ENCODE measurements at regions of chr2 and their contacts with region 1.

Region 1: DNA sequence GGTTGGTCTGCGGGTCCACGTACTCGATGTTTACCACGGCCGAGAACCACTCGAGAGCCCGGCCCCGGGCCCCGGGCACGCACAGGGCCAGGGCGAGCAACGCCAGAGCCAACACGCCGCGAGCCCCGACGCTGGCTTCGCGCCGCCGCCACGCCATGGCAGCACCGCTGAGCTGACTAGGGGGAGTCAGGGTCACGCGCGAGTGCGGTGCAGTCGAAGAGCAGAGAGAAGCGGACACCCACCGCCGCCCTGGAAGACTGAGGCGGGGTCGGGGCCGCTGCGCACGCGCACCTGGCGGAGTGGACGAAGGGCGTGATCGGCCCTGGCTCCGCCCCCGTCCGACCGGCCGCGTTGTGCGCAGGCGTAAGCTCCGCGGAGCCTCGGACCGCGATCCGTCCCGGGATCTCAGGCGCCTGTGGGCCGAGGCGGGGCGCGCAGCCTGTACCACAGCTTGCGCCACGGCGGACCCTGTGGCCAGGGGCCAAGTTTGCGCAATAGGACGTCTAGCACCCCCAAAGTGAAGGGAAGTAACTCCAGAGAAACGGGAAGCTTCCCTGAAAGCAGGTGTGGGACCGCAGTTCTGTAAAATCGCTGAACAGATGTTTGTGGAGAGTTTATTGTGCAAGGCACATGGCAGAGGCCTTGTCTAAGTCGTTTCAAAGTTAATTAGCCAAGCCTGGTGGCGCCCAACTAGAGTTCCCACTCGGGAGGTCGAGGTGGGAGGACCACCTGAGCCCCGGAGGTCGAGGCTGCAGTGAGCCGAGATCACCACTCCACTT is at the start of gene RNF149:
- DNase-seq: peak; percentile 88
- ATAC-seq: peak; percentile 86
- H3K4me3 ChIP-seq: peak within 1 kb of the TSS; percentile 76 to 95 (median 93)
- H3K27ac ChIP-seq: peak within 1 kb of the TSS; percentile 85
- H3K4me1 ChIP-seq: peaks cover 65% of the 10 kb centered on the region
- H3K27me3 ChIP-seq: no peaks in the 10 kb centered on the region; a peak in 1 of 5 replicates
- CTCF ChIP-seq: peak; percentile 48
- EP300 ChIP-seq: peak; percentile 76 to 82
- POLR2A ChIP-seq: peak; percentile 90 to 98
- RAD21 ChIP-seq: peak; percentile 49
- total RNA-seq, gene RNF149: 45.7 and 109 TPM in 2 replicates

Region 2: DNA sequence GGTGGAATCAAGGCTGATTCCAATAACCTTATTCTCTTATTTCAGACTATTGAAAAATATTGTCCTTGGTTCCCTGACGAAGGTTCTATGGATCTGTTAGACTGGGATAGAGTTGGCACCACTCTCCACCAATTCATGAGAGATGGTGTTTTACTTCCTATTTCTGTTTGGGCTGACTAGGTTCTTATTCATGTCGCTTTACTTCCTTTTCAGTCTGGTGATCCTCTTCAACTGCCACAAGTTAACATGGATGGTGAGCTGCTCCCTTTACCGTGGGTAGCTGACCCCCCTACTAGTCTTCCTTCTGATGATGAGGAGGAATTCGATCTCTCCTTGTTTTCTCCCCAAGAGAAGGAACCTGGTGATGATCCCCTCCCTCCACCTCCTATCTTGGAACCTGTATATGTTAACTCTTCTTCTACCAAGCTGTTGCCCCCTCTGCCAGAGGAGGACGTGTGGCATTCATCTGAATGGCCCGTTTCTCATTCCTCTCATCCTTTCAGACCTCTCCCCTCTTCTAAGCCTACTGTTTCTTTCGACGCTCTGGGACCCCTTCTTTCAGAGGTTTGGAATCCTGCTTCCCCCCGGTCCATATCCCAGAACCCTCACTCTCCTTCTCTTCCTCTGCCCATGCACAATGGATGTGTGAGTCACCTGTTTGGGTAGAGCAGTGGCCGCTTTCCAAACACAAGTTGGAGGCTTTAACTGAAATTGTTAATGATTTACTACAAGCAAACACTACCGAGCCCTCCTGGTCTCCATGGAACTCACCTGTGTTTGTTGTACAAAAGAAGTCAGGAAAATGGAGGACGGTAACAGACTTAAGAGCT is 69.5 kb before region 1 on chr2:
- CTCF ChIA-PET with region 1: no interaction called
- POLR2A ChIA-PET with region 1: interaction called, 13 read pairs
- in situ Hi-C with region 1: no loop called
- intact Hi-C with region 1: no loop called
- DNase-seq: peak; percentile 99
- ATAC-seq: peak; percentile 99
- H3K4me3 ChIP-seq: peak overlapping the region in 1 of 3 experiments; percentile 47; a peak in 2 of 6 replicates
- H3K27ac ChIP-seq: peak overlapping the region; percentile 98
- H3K4me1 ChIP-seq: peaks cover 81% of the 10 kb centered on the region
- H3K27me3 ChIP-seq: no peaks in the 10 kb centered on the region
- CTCF ChIP-seq: no peak; the same call in 1 of the 2 replicates
- EP300 ChIP-seq: peak in 1 of 2 experiments; percentile 76; a peak in 2 of 4 replicates
- POLR2A ChIP-seq: peak; percentile 57 to 77
- RAD21 ChIP-seq: no peak

Region 3: GRCh38 chr2:101328474-101329007 is 19.9 kb after region 1 on chr2:
- CTCF ChIA-PET with region 1: interaction called, 3 read pairs
- POLR2A ChIA-PET with region 1: interaction called, 37 read pairs
- in situ Hi-C with region 1: no loop called
- intact Hi-C with region 1: loop called (anchors 2 kb)
- DNase-seq: no peak
- ATAC-seq: no peak
- H3K4me3 ChIP-seq: no peak overlapping the region
- H3K27ac ChIP-seq: no peak overlapping the region
- H3K4me1 ChIP-seq: peaks cover 59% of the 10 kb centered on the region
- H3K27me3 ChIP-seq: no peaks in the 10 kb centered on the region
- CTCF ChIP-seq: no peak
- EP300 ChIP-seq: no peak
- POLR2A ChIP-seq: no peak
- RAD21 ChIP-seq: no peak

Measured in HepG2 (cell line).